Dendritic cell treated with granulocyte-macrophage colony-stimulating factor and Interleukin-4, amounts not matched to agents 40 ng/mL and 50 ng/mL, for 4 days (primary cell): ENCODE measurements at regions of chr2 and their contacts with region 1.

Region 1: DNA sequence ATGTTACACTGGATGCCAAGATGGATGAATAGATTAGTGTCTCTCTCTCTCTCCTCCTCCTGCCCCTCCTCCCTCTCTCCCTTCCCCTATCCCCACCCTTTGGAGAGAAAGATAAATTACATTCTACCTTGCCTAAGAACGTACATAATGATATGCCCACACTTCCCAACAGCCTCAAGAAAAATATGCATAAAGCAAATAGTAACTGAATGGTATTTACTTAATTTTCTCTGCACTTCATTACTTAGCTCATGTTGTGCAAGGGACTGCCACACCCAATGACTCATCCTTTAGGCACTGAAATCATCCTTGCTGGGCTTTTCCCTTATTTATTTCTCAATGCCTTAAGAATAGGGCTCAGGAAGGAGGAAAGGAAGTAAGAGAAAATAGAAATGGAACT is 137.3 kb upstream of the PID1 start:
- H3K4me3 Mint-ChIP-seq: no peak overlapping the region
- H3K27ac Mint-ChIP-seq: peak overlapping the region; percentile 78
- H3K4me1 Mint-ChIP-seq: peaks cover 50% of the 10 kb centered on the region
- H3K27me3 Mint-ChIP-seq: peaks cover 11% of the 10 kb centered on the region

Region 2: GRCh38 chr2:229287823-229288222 is 120.5 kb before region 1 on chr2:
- intact Hi-C with region 1: loop called (anchors 5 kb)
- H3K4me3 Mint-ChIP-seq: no peak overlapping the region
- H3K27ac Mint-ChIP-seq: peak overlapping the region; percentile 4
- H3K4me1 Mint-ChIP-seq: peaks cover 21% of the 10 kb centered on the region
- H3K27me3 Mint-ChIP-seq: no peaks in the 10 kb centered on the region